ENCODE measurements at regions of chr15 and their contacts with region 1.

Region 1: DNA sequence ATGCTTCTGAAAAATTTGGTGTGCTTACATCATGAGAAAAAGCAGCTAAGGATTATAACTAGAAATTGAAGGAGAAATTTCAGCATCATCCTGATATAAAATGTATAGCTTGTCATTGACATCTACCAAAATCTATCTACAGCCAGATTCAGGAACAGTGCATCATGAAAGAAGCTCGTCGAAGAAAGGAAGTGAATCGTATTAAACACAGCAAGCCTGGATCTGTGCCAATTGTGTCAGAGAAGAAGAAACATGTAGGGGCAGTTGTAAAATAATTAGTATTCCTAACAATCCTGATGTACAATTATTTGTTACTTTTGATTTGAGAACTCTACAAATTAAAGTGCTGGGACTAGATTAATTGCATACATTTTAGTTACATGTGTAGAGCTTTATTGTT is 37.2 kb downstream of the AP4E1 start:
- DNase-seq: peak; percentile 35
- H3K4me3 ChIP-seq: no peak overlapping the region
- H3K27ac ChIP-seq: no peak overlapping the region
- H3K4me1 ChIP-seq: no peaks in the 10 kb centered on the region
- H3K27me3 ChIP-seq: no peaks in the 10 kb centered on the region
- CTCF ChIP-seq: no peak

Region 2: DNA sequence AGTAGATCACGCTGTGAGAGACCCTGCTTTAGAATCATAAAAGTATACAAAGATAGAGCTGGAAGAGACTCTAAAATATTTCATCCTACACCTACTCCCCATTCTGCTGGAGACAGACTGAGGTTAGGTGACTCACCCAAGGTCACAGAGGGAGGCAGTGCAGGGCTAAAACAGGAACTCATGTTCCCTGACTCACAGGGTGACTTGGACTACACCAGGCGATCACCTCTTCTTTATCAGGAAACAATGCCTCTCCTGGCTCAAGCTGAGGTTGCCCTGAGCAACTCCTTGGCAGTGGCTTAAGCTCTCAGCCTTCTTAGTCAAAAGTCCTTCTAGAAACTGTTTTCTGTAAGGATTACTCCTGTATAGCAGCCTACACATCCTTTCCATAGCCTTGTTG is 175.4 kb after region 1 on chr15:
- CTCF ChIA-PET with region 1: no interaction called
- dilution Hi-C with region 1: no loop called
- in situ Hi-C with region 1: no loop called
- intact Hi-C with region 1: loop called (anchors 10 kb)
- DNase-seq: peak; percentile 96
- H3K4me3 ChIP-seq: no peak overlapping the region
- H3K27ac ChIP-seq: peak overlapping the region; percentile 55
- H3K4me1 ChIP-seq: peaks cover 16% of the 10 kb centered on the region
- H3K27me3 ChIP-seq: no peaks in the 10 kb centered on the region
- CTCF ChIP-seq: peak in 1 of 2 donors; percentile 10